GM10248 (cell line): ENCODE measurements at regions of chr2 and their contacts with region 1.

Region 1: GRCh38 chr2:15560988-15561573 is at the start of gene NBAS:
- DNase-seq: peak; percentile 86
- CTCF ChIP-seq: no peak

Region 2: DNA sequence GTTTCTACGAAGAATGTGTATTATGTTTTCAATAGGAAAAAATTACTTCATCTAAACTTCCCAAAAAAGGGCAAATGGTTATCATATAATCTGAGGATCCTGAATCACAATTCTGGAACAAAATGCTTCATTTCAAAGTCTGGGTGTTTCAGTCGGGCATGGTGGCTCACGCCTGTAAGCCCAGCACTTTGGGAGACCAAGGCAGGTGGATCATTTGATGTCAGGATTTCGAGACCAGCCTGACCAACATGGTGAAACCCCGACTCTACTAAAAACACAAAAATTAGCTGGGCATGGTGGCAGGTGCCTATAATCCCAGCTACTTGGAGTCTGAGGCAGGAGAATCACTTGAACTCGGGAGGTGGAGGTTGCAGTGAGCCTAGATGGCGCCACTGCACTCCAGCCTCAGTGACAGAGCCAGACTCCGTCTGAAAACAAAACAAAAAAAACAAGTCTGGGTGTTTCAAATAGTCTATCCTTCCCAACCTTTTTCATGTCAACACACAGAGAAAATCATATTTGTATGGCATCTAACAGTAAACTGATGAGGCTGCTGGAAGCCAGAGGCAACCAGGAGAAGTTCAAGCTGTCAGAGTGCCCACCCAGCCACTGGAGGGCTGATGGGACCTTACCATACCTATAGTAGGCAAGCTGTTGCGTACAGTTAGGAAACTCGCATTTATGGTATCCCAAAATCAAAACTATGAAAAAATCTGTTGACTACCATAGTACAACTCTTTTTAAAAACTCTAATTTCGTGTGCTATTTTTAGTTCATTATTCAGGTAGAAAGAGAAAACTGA is 14.6 kb before region 1 on chr2:
- CTCF ChIA-PET with region 1: interaction called, 24 read pairs
- POLR2A ChIA-PET with region 1: no interaction called
- DNase-seq: no peak
- CTCF ChIP-seq: no peak

Region 3: DNA sequence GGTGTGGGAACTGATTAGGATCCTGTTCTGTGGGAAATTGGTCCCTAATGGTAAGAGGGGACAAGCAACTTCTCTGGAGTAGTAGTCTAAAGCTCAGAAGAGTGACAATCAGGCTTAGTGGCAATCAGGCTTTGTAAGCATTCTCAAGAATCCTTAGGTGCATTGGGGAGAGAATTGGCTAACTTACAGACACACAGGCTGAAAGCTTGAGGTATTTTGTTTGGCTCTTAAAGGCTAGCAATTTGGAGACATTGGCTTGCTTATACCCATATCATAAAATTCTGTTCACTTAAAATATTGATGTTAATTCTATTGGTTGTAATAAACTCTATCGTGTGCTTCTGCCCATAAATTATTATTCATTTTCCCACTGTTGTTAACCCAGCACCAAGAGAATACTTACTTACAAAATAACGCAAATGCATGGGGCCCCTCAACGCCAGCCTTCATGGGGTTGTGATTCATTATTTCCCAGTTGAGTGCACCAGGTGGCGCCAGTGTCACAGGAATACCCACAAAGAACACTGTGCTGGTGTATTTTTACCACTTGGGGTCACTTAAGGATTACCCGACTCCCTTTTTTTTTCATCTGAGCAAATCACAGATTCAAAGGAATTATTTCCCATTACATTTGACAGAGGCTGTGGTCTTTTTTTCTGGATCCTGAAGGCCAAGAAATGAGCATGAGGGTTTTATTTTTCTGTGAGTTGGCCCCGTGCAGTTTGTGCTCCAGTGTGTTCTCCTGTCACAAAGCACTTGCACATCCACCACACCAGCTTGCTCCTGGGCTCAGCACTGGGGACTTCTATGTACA is 76.1 kb after region 1 on chr2:
- CTCF ChIA-PET with region 1: no interaction called
- POLR2A ChIA-PET with region 1: no interaction called
- DNase-seq: peak; percentile 58
- CTCF ChIP-seq: peak; percentile 77